ENCODE measurements at regions of chr20 and their contacts with region 1.

Region 1: DNA sequence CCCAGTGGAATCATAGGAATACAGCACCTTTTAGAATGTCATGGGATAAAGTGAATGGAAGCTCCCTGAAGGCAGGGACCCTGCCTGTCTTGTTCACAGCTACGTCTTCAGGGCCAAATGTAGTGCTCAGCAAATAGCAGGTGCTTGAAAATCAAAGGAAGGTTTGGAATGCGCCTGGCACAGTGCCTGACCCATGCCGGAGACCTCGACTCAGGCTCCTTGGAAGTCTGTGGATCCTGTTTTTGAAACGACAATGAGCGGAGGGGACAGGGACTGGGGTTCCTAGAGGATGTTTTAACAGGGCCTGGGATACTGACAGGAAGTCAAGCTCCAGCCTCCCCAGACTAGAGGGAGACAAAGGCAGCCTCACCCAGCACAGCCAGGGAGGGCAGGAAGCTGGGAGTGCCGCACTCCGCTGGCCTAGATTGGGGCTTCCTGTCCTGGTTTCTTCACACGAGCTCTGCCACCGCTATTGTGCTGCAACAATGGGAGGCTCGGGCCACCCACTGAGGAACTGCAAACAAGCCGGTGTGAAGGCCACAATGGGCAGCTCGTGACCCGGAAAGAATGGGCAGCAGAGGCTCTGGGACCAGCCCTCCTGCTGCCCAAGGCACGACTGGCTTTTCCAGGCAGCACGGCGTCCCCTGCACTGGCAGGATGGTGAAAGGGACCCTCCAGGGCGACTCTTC is 76.7 kb downstream of the PREX1 start:
- DNase-seq: peak in 9 of 10 donors; percentile 61 to 80 (median 77)
- H3K4me3 ChIP-seq: peak overlapping the region in 7 of 59 donors; percentile 2 to 21 (median 12)
- H3K27ac ChIP-seq: peak overlapping the region; percentile 53 to 100 (median 94)
- H3K27me3 ChIP-seq: no peaks in the 10 kb centered on the region
- CTCF ChIP-seq: peak in 14 of 56 donors; percentile 5 to 37 (median 13)

Region 2: DNA sequence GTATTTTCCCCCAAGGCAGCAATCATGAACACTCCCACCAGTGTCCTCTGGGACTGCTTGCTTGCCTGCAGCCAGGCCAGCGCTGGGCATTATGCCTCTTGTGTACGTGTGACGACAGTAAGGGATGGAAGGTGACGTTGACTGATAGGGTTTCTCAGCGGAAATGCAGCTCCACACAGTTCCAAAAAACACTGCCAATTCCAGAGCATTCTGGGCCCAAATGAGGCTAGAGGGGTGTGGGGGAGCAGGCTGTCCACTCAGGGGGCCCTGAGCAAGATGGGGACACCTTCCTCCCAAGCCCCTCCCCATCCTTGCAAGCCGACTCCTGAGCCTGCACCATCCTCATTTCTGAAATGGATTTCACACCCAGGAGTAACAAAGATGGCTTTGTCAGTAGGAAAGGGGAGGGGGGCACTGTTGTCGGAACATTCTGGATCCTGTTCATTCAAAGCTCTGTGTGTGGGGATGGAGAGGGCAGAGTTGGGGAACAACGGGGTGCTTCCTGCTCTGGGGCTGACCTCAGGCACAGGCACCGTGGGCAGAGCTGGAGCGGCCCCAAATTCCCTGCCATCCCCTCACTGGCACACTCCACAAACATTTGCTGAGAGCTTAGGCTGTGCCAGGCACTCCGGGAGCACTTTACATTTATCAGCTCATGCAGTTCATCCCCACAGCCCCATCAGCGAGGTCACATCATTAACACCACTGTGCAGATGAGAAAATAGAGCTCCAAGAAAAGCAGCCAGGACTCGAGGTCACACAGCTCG is 56.8 kb after region 1 on chr20:
- intact Hi-C with region 1: loop called in 1 of 2 experiments (anchors 5 kb)
- DNase-seq: peak in 9 of 10 donors; percentile 43 to 81 (median 70)
- H3K4me3 ChIP-seq: peak overlapping the region in 18 of 59 donors; percentile 1 to 49 (median 12)
- H3K27ac ChIP-seq: peak overlapping the region; percentile 25 to 97 (median 90)
- H3K27me3 ChIP-seq: no peaks in the 10 kb centered on the region
- CTCF ChIP-seq: peak in 3 of 56 donors; percentile 6 to 27 (median 10)

Measured in dorsolateral prefrontal cortex (tissue), 120 donors.